GM13976 (cell line): ENCODE measurements at regions of chr17 and their contacts with region 1.

Region 1: GRCh38 chr17:29111816-29112499 is 68.2 kb downstream of the MYO18A start:
- DNase-seq: peak; percentile 86
- CTCF ChIP-seq: peak; percentile 91

Region 2: DNA sequence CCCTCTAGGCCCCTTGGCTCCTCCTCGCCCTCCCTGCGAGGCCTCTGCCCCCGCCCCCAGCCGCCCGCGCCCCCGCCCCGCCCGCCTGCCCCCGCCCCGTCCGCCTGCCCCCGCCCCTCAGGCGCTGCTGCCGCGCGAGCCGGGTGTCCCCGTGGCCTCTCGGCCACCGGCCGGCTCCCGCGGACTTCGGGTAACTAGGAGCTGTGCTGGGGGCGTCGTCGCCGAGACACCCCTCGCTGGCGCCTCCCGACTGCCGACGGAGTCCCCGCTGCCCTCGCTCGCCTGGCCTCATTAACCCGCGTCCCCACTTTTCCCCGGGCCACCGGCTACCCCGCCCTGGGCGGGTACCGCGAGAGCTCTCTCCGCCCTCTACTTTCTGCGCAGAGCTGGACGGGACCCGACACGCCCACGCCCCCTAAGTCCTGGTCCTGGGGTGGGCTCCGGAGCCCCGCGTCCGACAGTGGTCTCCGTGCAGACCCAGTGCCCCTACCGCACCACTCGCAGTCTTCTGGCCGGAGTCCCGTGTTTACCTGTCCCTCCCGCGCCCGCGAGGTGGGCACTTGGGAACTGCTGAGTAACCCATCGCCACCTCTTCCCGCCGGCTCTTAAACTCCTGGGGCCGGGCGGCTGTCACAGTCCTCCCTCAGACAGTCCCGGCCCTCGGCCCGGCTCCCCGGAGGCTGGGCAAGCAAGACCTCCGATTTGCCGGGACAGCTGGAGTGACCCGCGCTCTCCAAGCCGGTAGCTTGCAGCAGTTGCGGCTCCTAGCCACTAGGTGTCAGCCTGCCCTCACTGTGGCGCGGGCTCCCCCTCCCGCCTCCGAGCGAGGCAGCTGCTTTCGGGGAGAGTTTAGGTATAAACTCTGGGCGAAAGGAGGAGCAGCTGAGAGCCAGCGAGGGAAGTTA is 385.5 kb before region 1 on chr17 and contains the start of gene TLCD1:
- in situ Hi-C with region 1: loop called (anchors 25 kb)
- DNase-seq: peak; percentile 87
- CTCF ChIP-seq: peak; percentile 99

Region 3: GRCh38 chr17:28967221-28968140 is 144.5 kb before region 1 on chr17:
- in situ Hi-C with region 1: loop called (anchors 5 kb)
- DNase-seq: no peak
- CTCF ChIP-seq: no peak